WTC11 (cell line): ENCODE measurements at regions of chr12 and their contacts with region 1.

Region 1: GRCh38 chr12:48995061-48995879 is 3.9 kb downstream of the DDN start:
- DNase-seq: peak; percentile 93
- ATAC-seq: peak; percentile 69
- H3K4me3 Mint-ChIP-seq: peak overlapping the region; percentile 46
- H3K27ac Mint-ChIP-seq: no peak overlapping the region
- H3K4me1 Mint-ChIP-seq: peaks cover 24% of the 10 kb centered on the region
- H3K27me3 Mint-ChIP-seq: peaks cover 76% of the 10 kb centered on the region
- CTCF ChIP-seq: peak; percentile 58

Region 2: DNA sequence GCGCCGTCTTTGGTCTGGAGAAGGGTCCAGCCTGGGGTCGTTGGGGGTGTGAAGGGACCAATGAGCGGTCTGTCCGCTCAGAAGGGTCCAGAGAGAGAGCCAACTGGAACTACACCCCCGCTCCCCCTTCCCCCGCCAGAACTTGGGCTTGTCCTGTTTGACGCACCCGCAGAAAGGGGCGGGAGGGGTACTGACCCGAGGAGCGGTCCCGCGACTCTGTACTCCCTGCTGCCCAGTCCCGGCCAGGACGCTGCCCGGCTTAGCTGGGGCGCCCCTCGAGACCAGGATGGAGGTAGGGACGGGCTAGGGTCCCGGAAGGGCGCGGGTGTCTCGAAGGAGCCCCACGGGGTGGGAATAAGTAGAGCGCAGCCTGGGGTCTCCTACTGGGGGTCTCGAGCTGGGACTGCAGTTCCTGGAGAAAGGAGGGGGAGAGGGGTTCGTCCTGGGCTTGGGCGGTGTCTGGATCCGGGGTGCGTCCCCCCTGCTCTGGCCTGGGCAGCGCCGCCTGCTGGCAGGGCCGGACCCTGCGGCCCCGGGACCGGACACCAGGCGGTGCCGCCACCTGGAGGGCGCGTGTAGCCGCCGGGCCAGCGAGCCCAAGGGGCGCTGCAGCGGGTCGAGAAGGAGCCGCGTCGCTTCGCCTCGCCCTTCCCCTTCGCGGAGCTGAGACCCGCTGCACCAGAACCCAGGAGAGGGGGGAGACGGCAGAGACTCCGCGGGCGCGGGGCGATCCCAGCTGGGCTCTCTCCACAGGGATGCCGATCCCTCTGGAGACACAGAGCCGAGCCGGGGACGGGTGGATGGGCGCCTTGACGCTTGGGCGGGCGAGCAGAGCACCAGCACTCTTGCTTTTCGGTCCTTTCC is 180.8 kb before region 1 on chr12:
- CTCF ChIA-PET with region 1: interaction called, 22 read pairs
- POLR2A ChIA-PET with region 1: no interaction called
- DNase-seq: peak; percentile 81
- ATAC-seq: peak; percentile 25
- H3K4me3 Mint-ChIP-seq: peak overlapping the region; percentile 87
- H3K27ac Mint-ChIP-seq: no peak overlapping the region
- H3K4me1 Mint-ChIP-seq: peaks cover 45% of the 10 kb centered on the region
- H3K27me3 Mint-ChIP-seq: peaks cover 69% of the 10 kb centered on the region
- CTCF ChIP-seq: peak; percentile 92

Region 3: GRCh38 chr12:48903982-48904411 is 91.3 kb before region 1 on chr12:
- CTCF ChIA-PET with region 1: interaction called, 12 read pairs
- POLR2A ChIA-PET with region 1: no interaction called
- DNase-seq: peak; percentile 92
- ATAC-seq: peak; percentile 100
- H3K4me3 Mint-ChIP-seq: peak overlapping the region; percentile 65
- H3K27ac Mint-ChIP-seq: no peak overlapping the region
- H3K4me1 Mint-ChIP-seq: 0 out of 2 replicates have a peak, but pooled peaks cover 3% of the 10 kb centered on the region
- H3K27me3 Mint-ChIP-seq: peaks cover 14% of the 10 kb centered on the region
- CTCF ChIP-seq: peak; percentile 45; the same call in 1 of the 2 replicates

Region 4: DNA sequence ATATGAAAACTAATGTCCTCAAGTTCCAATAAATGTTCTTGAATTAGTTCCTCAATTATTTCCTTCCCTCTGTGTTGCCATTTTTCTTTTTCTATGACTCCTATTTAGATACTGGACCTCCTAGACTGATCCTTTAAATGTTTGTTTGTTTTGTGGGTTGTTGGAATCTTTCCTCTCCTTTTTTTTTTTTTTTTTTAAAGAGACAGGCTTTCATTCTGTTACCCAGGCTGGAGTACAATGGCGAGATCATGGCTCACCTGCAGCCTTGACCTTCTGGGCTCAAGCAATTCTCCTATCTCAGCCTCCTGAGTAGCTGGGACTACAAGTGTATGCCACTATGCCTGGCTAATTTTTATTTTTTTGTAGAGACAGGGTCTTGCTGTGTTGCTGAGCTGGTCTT is 13.7 kb after region 1 on chr12:
- CTCF ChIA-PET with region 1: interaction called, 25 read pairs
- POLR2A ChIA-PET with region 1: no interaction called
- DNase-seq: no peak
- ATAC-seq: no peak
- H3K4me3 Mint-ChIP-seq: no peak overlapping the region
- H3K27ac Mint-ChIP-seq: no peak overlapping the region
- H3K4me1 Mint-ChIP-seq: peaks cover 4% of the 10 kb centered on the region; the same call in 1 of the 2 replicates
- H3K27me3 Mint-ChIP-seq: no peaks in the 10 kb centered on the region
- CTCF ChIP-seq: no peak

Region 5: GRCh38 chr12:49060237-49061156 is 65.2 kb after region 1 on chr12 and contains the start of gene KMT2D:
- CTCF ChIA-PET with region 1: interaction called, 21 read pairs
- POLR2A ChIA-PET with region 1: no interaction called
- DNase-seq: peak; percentile 92
- ATAC-seq: peak; percentile 64
- H3K4me3 Mint-ChIP-seq: peak within 1 kb of the TSS; percentile 96
- H3K27ac Mint-ChIP-seq: peak within 1 kb of the TSS; percentile 92
- H3K4me1 Mint-ChIP-seq: peaks cover 47% of the 10 kb centered on the region
- H3K27me3 Mint-ChIP-seq: no peaks in the 10 kb centered on the region
- CTCF ChIP-seq: no peak
- total RNA-seq, gene KMT2D: 100 to 104 TPM (median 101 TPM) in 3 replicates

Region 6: GRCh38 chr12:49098035-49098451 is 102.8 kb after region 1 on chr12:
- CTCF ChIA-PET with region 1: interaction called, 18 read pairs
- POLR2A ChIA-PET with region 1: no interaction called
- DNase-seq: peak; percentile 87
- ATAC-seq: peak; percentile 73
- H3K4me3 Mint-ChIP-seq: no peak overlapping the region
- H3K27ac Mint-ChIP-seq: no peak overlapping the region
- H3K4me1 Mint-ChIP-seq: peaks cover 21% of the 10 kb centered on the region
- H3K27me3 Mint-ChIP-seq: peaks cover 29% of the 10 kb centered on the region
- CTCF ChIP-seq: peak; percentile 92

Region 7: DNA sequence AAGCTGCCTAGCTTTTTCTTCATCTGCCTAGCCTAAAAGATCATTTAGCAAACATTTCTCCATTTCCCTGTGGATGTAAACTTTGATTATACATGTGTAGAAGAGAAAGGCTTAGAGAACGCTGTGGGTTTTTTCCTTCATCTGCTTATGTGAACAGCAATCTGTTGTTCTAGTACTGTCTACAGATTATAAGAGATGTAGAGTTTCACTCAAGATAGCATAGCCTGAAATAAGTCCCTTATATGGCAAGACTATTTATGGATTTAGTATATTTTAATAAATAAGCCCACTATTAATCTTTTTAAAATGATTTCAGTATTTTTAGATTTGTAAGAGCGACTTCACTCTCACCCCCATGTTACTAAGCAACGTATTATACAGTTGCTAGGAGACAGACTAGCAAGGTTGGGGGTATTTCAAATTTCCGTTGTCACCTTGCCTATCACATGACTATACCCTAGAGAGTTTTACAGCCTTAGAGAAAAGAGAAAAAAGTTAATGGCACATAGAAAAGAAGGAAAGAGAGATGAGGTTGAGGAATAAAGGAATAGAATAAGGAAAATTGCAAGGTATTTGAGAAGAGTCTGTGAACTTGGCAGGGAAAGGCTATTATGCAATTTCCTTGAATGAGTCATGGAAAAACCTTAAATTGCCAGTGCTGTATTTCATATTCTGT is 205.8 kb after region 1 on chr12:
- CTCF ChIA-PET with region 1: no interaction called
- POLR2A ChIA-PET with region 1: no interaction called
- DNase-seq: no peak
- ATAC-seq: peak; percentile 59
- H3K4me3 Mint-ChIP-seq: no peak overlapping the region
- H3K27ac Mint-ChIP-seq: peak overlapping the region; percentile 47
- H3K4me1 Mint-ChIP-seq: peaks cover 26% of the 10 kb centered on the region
- H3K27me3 Mint-ChIP-seq: no peaks in the 10 kb centered on the region
- CTCF ChIP-seq: no peak

Region 8: DNA sequence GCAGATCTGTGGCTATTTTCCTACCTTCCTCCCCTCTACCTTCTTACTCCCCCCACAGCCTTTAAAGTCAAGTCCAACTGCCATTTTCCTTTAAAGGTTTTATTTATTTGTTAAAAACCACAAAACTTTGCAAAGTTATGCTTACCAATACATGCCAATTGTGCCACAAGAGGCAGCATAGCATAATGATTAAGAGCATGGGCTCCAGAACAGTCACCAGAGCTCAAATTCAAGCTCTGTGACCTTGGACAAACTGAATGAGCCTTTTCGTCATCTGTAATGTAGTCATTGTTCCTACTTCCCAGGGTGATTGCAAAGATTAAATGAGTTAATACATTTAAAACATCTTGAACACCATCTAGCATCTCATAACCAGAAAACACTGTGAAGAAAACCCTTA is 724.9 kb after region 1 on chr12:
- CTCF ChIA-PET with region 1: no interaction called
- POLR2A ChIA-PET with region 1: no interaction called
- DNase-seq: no peak
- ATAC-seq: no peak
- H3K4me3 Mint-ChIP-seq: no peak overlapping the region
- H3K27ac Mint-ChIP-seq: no peak overlapping the region
- H3K4me1 Mint-ChIP-seq: no peaks in the 10 kb centered on the region
- H3K27me3 Mint-ChIP-seq: peaks cover 4% of the 10 kb centered on the region
- CTCF ChIP-seq: no peak